Aorta (tissue), 5 donors: ENCODE measurements at regions of chr13 and their contacts with region 1.

Region 1: DNA sequence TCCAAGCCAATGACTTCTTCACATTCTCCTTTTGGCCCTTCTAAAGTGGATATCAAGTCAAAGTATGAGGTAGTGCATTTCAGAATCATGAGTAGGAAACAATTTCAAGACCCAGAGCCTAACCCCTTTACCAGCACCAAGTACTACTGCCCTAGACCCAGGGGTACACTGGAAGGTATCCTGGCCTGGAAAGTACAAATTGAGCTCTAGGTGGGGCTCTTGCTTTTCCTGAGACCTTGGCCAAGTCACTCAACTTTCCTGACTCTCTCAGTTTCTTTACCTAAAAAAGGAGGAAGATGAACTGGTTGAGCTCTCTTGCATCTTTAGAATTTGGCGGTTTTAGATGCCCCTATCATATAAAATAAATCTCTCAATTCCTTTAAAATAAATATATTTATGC is 204.7 kb downstream of the FGF14 start:
- DNase-seq: no peak
- ATAC-seq: no peak
- H3K4me3 ChIP-seq: no peak overlapping the region
- H3K27ac ChIP-seq: no peak overlapping the region
- H3K4me1 ChIP-seq: no peaks in the 10 kb centered on the region
- H3K27me3 ChIP-seq: no peaks in the 10 kb centered on the region

Region 2: GRCh38 chr13:102452831-102453230 is 255.6 kb after region 1 on chr13:
- intact Hi-C with region 1: loop called in 1 of 2 experiments (anchors 10 kb)
- DNase-seq: no peak
- ATAC-seq: no peak
- H3K4me3 ChIP-seq: no peak overlapping the region
- H3K27ac ChIP-seq: no peak overlapping the region
- H3K4me1 ChIP-seq: no peaks in the 10 kb centered on the region
- H3K27me3 ChIP-seq: no peaks in the 10 kb centered on the region